ENCODE measurements at regions of chr10 and their contacts with region 1.

Region 1: GRCh38 chr10:71246591-71247161 is 34.3 kb downstream of the UNC5B start:
- DNase-seq: peak; percentile 53
- ATAC-seq: peak; percentile 57
- H3K4me3 ChIP-seq: no peak overlapping the region
- H3K27ac ChIP-seq: no peak overlapping the region
- H3K4me1 ChIP-seq: peaks cover 9% of the 10 kb centered on the region
- H3K27me3 ChIP-seq: no peaks in the 10 kb centered on the region
- CTCF ChIP-seq: no peak

Region 2: DNA sequence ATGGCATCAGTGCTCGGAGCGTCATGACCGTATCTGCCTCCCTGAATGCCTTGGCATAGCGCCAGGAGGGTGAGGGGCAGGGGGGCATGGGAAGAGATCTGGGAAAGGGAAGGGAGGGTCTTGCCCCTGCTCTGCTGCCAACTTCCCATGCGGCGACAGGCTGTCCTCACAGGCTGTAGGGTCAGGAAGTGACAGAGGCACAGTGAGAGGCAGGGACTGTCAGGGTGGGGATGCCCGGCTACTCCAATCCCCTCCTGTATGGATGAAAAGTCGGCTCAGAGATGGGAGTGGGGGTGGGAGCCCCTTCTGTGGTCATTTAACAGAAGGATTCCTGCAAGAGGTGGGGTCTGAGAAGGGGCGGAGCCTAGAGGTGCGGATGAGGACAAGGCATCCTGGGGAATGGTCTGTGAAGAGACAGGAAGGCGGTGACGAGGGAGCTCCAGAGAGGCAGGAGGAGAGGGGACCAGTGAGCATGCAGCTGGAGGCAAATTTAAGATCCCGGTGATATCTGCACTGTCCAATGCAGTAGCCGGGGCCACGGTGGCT is 55.1 kb before region 1 on chr10:
- CTCF ChIA-PET with region 1: no interaction called
- POLR2A ChIA-PET with region 1: no interaction called
- intact Hi-C with region 1: no loop called
- DNase-seq: no peak
- ATAC-seq: no peak
- H3K4me3 ChIP-seq: no peak overlapping the region
- H3K27ac ChIP-seq: no peak overlapping the region
- H3K4me1 ChIP-seq: no peaks in the 10 kb centered on the region
- H3K27me3 ChIP-seq: no peaks in the 10 kb centered on the region
- CTCF ChIP-seq: no peak

Region 3: GRCh38 chr10:71257319-71257997 is 10.8 kb after region 1 on chr10:
- CTCF ChIA-PET with region 1: no interaction called
- POLR2A ChIA-PET with region 1: no interaction called
- intact Hi-C with region 1: loop called (anchors 1 kb)
- DNase-seq: no peak
- ATAC-seq: no peak
- H3K4me3 ChIP-seq: no peak overlapping the region
- H3K27ac ChIP-seq: no peak overlapping the region
- H3K4me1 ChIP-seq: peaks cover 16% of the 10 kb centered on the region; the same call in 1 of the 2 replicates
- H3K27me3 ChIP-seq: no peaks in the 10 kb centered on the region
- CTCF ChIP-seq: no peak